ENCODE measurements at regions of chr11 and their contacts with region 1.

Region 1: DNA sequence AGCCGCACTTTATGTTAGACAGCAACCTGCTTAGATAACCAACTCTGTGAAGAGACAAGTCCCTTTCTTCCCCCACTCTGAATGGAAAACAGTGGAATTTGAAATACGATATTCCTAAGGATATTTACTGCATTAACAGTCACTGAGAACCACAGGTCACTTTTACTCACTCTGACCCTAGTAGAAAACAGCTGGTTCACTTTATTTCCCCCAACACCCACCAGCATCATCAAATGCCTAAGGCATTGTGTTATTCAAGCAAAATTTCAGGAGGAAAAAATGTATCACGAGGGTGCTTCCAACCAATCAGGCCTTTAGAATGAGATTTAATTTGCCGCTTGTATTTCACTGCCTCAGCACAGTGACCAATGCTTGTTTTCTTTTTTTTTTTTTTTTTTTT is 1134.1 kb upstream of the CCDC90B start:
- DNase-seq: no peak
- ATAC-seq: no peak
- H3K4me3 ChIP-seq: no peak overlapping the region
- H3K27ac ChIP-seq: no peak overlapping the region
- H3K4me1 ChIP-seq: no peaks in the 10 kb centered on the region
- H3K27me3 ChIP-seq: no peaks in the 10 kb centered on the region
- CTCF ChIP-seq: no peak
- POLR2A ChIP-seq: no peak

Region 2: GRCh38 chr11:84372381-84372950 is 47.8 kb before region 1 on chr11:
- intact Hi-C with region 1: loop called in 1 of 10 experiments (anchors 10 kb)
- DNase-seq: no peak
- ATAC-seq: no peak
- H3K4me3 ChIP-seq: no peak overlapping the region
- H3K27ac ChIP-seq: no peak overlapping the region
- H3K4me1 ChIP-seq: no peaks in the 10 kb centered on the region
- H3K27me3 ChIP-seq: no peaks in the 10 kb centered on the region
- CTCF ChIP-seq: no peak
- POLR2A ChIP-seq: no peak

Measured in heart left ventricle (tissue), 16 donors.